MCF 10A (cell line): ENCODE measurements at regions of chr2 and their contacts with region 1.

Region 1: GRCh38 chr2:65613968-65614555 is 181.7 kb upstream of the SPRED2 start:
- DNase-seq: no peak
- H3K4me3 Mint-ChIP-seq: no peak overlapping the region
- H3K27ac Mint-ChIP-seq: peak overlapping the region; percentile 98
- H3K4me1 Mint-ChIP-seq: peaks cover 26% of the 10 kb centered on the region
- H3K27me3 Mint-ChIP-seq: no peaks in the 10 kb centered on the region
- CTCF ChIP-seq: no peak

Region 2: DNA sequence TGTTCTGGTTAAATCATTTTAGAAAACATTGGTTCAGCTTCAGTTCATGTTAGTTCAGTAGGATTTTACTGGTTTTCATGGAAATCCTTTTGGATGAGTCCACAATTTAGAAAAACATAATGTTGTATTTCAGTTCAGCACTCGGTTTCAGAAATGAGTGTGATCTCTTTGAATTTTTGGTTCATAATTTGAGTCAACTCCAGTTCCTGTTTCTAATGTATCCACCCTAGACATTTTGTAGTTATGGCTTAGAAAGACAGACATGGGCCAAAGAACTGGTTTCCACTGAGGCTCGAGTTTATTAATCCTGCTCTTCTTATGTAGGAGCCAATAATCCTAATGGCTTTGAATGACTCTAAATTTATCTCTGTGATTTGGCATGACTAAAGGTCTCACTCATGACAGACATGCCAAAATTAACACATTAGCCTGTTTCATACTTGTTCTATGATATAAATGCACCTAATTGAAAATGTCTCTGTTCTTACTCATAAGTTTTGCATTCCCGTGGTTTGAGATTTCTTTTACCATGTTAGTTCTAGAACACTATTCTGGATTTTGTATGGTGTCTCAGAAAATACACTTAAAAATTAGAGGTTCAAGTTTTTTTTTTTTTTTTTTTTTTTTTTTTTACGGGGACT is 99.4 kb before region 1 on chr2:
- CTCF ChIA-PET with region 1: no interaction called
- POLR2A ChIA-PET with region 1: no interaction called
- intact Hi-C with region 1: no loop called
- DNase-seq: no peak
- H3K4me3 Mint-ChIP-seq: no peak overlapping the region
- H3K27ac Mint-ChIP-seq: no peak overlapping the region
- H3K4me1 Mint-ChIP-seq: no peaks in the 10 kb centered on the region
- H3K27me3 Mint-ChIP-seq: no peaks in the 10 kb centered on the region
- CTCF ChIP-seq: no peak

Region 3: DNA sequence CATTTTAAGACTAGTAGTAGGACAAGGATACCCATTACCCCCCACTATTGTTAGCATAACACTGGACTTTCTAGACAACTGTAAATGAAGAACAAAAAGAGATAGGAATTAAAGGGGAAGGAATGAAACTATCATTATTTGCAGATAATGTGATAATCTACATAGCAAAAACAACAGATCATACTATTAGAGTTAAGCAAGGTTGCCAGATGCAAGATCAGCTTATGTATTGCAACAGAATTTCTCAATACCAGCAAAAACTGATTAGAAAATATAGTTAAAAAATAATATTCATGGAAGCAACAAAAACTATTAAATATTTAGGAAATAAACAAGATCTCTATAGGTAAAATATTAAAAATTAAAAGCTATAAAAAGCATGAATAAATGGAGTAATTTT is 12.8 kb after region 1 on chr2:
- CTCF ChIA-PET with region 1: interaction called, 4 read pairs
- POLR2A ChIA-PET with region 1: interaction called, 15 read pairs
- intact Hi-C with region 1: no loop called
- DNase-seq: no peak
- H3K4me3 Mint-ChIP-seq: no peak overlapping the region
- H3K27ac Mint-ChIP-seq: no peak overlapping the region
- H3K4me1 Mint-ChIP-seq: peaks cover 30% of the 10 kb centered on the region
- H3K27me3 Mint-ChIP-seq: no peaks in the 10 kb centered on the region
- CTCF ChIP-seq: no peak